B cell (primary cell): ENCODE measurements at regions of chr16 and their contacts with region 1.

Region 1: GRCh38 chr16:84738255-84739038 is 38.6 kb downstream of the USP10 start:
- DNase-seq: peak; percentile 89
- ATAC-seq: peak; percentile 89
- H3K4me3 ChIP-seq: no peak overlapping the region
- H3K4me3 Mint-ChIP-seq: peak overlapping the region; percentile 46
- H3K27ac ChIP-seq: no peak overlapping the region
- H3K27ac Mint-ChIP-seq: peak overlapping the region; percentile 27
- H3K4me1 ChIP-seq: peaks cover 6 to 12% of the 10 kb centered on the region in 2 donors
- H3K4me1 Mint-ChIP-seq: peaks cover 30% of the 10 kb centered on the region
- H3K27me3 ChIP-seq: no peaks in the 10 kb centered on the region
- H3K27me3 Mint-ChIP-seq: no peaks in the 10 kb centered on the region
- CTCF ChIP-seq: peak; percentile 96

Region 2: GRCh38 chr16:84109598-84110325 is 628.7 kb before region 1 on chr16:
- CTCF ChIA-PET with region 1: no interaction called
- POLR2A ChIA-PET with region 1: no interaction called
- intact Hi-C with region 1: no loop called
- DNase-seq: no peak
- ATAC-seq: no peak
- H3K4me3 ChIP-seq: no peak overlapping the region
- H3K4me3 Mint-ChIP-seq: no peak overlapping the region
- H3K27ac ChIP-seq: no peak overlapping the region
- H3K27ac Mint-ChIP-seq: no peak overlapping the region
- H3K4me1 ChIP-seq: no peaks in the 10 kb centered on the region
- H3K4me1 Mint-ChIP-seq: peaks cover 33% of the 10 kb centered on the region
- H3K27me3 ChIP-seq: no peaks in the 10 kb centered on the region
- H3K27me3 Mint-ChIP-seq: no peaks in the 10 kb centered on the region
- CTCF ChIP-seq: no peak

Region 3: GRCh38 chr16:84511180-84511824 is 227.1 kb before region 1 on chr16:
- CTCF ChIA-PET with region 1: interaction called, 46 read pairs
- POLR2A ChIA-PET with region 1: interaction called, 3 read pairs
- intact Hi-C with region 1: loop called (anchors 1 kb)
- DNase-seq: peak; percentile 87
- ATAC-seq: peak; percentile 40
- H3K4me3 ChIP-seq: no peak overlapping the region
- H3K4me3 Mint-ChIP-seq: peak overlapping the region; percentile 44
- H3K27ac ChIP-seq: no peak overlapping the region
- H3K27ac Mint-ChIP-seq: peak overlapping the region; percentile 77
- H3K4me1 ChIP-seq: peaks cover 41 to 57% of the 10 kb centered on the region in 2 donors
- H3K4me1 Mint-ChIP-seq: peaks cover 49% of the 10 kb centered on the region
- H3K27me3 ChIP-seq: peaks cover 0 to 3% (median 0%) of the 10 kb centered on the region in 4 experiments
- H3K27me3 Mint-ChIP-seq: no peaks in the 10 kb centered on the region
- CTCF ChIP-seq: peak; percentile 98

Region 4: GRCh38 chr16:84672276-84673202 is 65.9 kb before region 1 on chr16:
- CTCF ChIA-PET with region 1: interaction called, 55 read pairs
- POLR2A ChIA-PET with region 1: interaction called, 4 read pairs
- intact Hi-C with region 1: loop called (anchors 1 kb)
- DNase-seq: peak; percentile 82
- ATAC-seq: peak; percentile 96
- H3K4me3 ChIP-seq: no peak overlapping the region
- H3K4me3 Mint-ChIP-seq: no peak overlapping the region
- H3K27ac ChIP-seq: no peak overlapping the region
- H3K27ac Mint-ChIP-seq: peak overlapping the region; percentile 28
- H3K4me1 ChIP-seq: peaks cover 0 to 15% of the 10 kb centered on the region in 2 donors
- H3K4me1 Mint-ChIP-seq: peaks cover 10% of the 10 kb centered on the region
- H3K27me3 ChIP-seq: no peaks in the 10 kb centered on the region
- H3K27me3 Mint-ChIP-seq: peaks cover 3% of the 10 kb centered on the region
- CTCF ChIP-seq: peak; percentile 91

Region 5: GRCh38 chr16:84754353-84754856 is 16.0 kb after region 1 on chr16:
- CTCF ChIA-PET with region 1: interaction called, 102 read pairs
- POLR2A ChIA-PET with region 1: no interaction called
- intact Hi-C with region 1: no loop called
- DNase-seq: peak; percentile 89
- ATAC-seq: peak; percentile 88
- H3K4me3 ChIP-seq: peak overlapping the region in 1 of 5 experiments; percentile 21
- H3K4me3 Mint-ChIP-seq: peak overlapping the region; percentile 12
- H3K27ac ChIP-seq: no peak overlapping the region
- H3K27ac Mint-ChIP-seq: peak overlapping the region; percentile 57
- H3K4me1 ChIP-seq: peaks cover 44 to 47% of the 10 kb centered on the region in 2 donors
- H3K4me1 Mint-ChIP-seq: peaks cover 72% of the 10 kb centered on the region
- H3K27me3 ChIP-seq: no peaks in the 10 kb centered on the region
- H3K27me3 Mint-ChIP-seq: no peaks in the 10 kb centered on the region
- CTCF ChIP-seq: peak; percentile 91

Region 6: DNA sequence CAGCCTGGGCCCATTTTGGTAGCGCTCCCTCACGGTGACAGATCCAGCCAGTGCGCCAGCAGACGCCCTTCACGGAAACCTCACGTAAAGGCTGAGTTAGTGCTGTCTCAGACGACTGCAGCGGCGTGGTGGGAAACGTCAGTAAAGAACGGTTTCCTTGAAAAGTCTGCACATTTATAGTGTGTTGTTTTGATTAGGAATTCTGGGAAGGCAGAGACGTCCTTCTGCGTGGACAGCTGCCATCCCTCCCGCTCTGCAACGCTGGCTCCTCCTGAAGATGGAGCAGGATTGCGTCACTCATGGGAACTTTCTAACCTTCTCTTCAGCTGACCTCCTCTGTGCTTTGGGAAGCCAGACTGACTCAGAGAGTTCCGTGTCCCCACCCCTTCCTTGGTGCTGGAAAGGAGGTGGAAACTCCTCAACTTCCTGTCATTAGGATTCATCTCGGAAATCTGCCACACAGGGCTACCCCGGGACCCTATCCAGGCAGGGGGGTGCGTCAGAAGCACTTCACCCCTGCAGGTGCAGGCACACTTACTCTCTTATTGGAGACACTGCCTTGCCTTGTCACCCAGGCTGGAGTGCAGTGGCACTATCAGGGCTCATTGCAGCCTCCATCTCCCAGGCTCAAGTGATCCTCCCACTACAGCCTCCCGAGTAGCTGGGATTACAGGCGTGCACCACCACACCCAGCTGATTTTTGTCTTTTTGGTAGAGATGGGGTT is 57.0 kb after region 1 on chr16:
- CTCF ChIA-PET with region 1: no interaction called
- POLR2A ChIA-PET with region 1: no interaction called
- intact Hi-C with region 1: no loop called
- DNase-seq: no peak
- ATAC-seq: no peak
- H3K4me3 ChIP-seq: no peak overlapping the region
- H3K4me3 Mint-ChIP-seq: no peak overlapping the region
- H3K27ac ChIP-seq: no peak overlapping the region
- H3K27ac Mint-ChIP-seq: no peak overlapping the region
- H3K4me1 ChIP-seq: no peaks in the 10 kb centered on the region
- H3K4me1 Mint-ChIP-seq: no peaks in the 10 kb centered on the region
- H3K27me3 ChIP-seq: no peaks in the 10 kb centered on the region
- H3K27me3 Mint-ChIP-seq: no peaks in the 10 kb centered on the region
- CTCF ChIP-seq: no peak